ENCODE measurements at regions of chr12 and their contacts with region 1.

Region 1: DNA sequence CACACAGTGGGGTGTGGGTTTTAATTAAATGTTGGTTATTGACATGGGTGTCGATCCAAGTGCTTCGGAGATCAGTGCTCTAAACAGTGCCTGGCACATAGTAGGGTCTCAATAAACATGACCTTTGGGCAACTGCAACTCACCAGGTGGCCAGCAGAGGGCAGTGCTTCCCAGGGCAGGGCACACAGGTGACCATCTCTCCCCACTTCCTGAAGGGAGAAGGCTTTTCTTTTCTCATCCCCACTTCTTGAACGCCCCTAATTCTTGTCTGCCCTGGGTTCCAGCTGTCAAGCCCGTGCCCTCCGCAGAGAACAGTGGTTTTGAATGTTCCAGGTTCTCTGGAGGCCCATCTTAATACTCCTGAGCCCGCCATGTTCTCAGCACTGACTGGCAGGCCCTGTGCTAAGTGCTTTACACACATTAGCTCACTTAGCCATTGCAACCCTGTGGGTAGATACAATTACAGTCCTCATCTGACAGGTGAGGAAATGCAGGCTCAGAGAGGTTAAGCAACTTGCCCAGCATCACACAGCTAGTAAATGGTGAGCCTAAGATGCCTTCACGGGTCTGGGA is 16.3 kb downstream of the RAPGEF3 start:
- DNase-seq: peak; percentile 74 to 86
- H3K4me3 ChIP-seq: no peak overlapping the region
- H3K4me3 Mint-ChIP-seq: no peak overlapping the region
- H3K27ac Mint-ChIP-seq: no peak overlapping the region
- H3K4me1 ChIP-seq: peaks cover 5% of the 10 kb centered on the region; the same call in 1 of the 2 replicates
- H3K4me1 Mint-ChIP-seq: peaks cover 18% of the 10 kb centered on the region
- H3K27me3 ChIP-seq: no peaks in the 10 kb centered on the region
- H3K27me3 Mint-ChIP-seq: no peaks in the 10 kb centered on the region
- CTCF ChIP-seq: peak; percentile 94 to 99

Region 2: GRCh38 chr12:47343677-47344567 is 398.4 kb before region 1 on chr12:
- CTCF ChIA-PET with region 1: no interaction called
- POLR2A ChIA-PET with region 1: no interaction called
- intact Hi-C with region 1: no loop called
- DNase-seq: no peak
- H3K4me3 ChIP-seq: no peak overlapping the region
- H3K4me3 Mint-ChIP-seq: no peak overlapping the region
- H3K27ac Mint-ChIP-seq: no peak overlapping the region
- H3K4me1 ChIP-seq: peaks cover 12% of the 10 kb centered on the region
- H3K4me1 Mint-ChIP-seq: peaks cover 9% of the 10 kb centered on the region
- H3K27me3 ChIP-seq: no peaks in the 10 kb centered on the region
- H3K27me3 Mint-ChIP-seq: no peaks in the 10 kb centered on the region
- CTCF ChIP-seq: no peak

Region 3: GRCh38 chr12:47686645-47687240 is 55.6 kb before region 1 on chr12:
- CTCF ChIA-PET with region 1: no interaction called
- POLR2A ChIA-PET with region 1: no interaction called
- intact Hi-C with region 1: no loop called
- DNase-seq: peak in 1 of 2 experiments; percentile 49
- H3K4me3 ChIP-seq: no peak overlapping the region
- H3K4me3 Mint-ChIP-seq: no peak overlapping the region
- H3K27ac Mint-ChIP-seq: no peak overlapping the region
- H3K4me1 ChIP-seq: no peaks in the 10 kb centered on the region; the same call in 1 of the 2 replicates
- H3K4me1 Mint-ChIP-seq: no peaks in the 10 kb centered on the region
- H3K27me3 ChIP-seq: no peaks in the 10 kb centered on the region
- H3K27me3 Mint-ChIP-seq: no peaks in the 10 kb centered on the region
- CTCF ChIP-seq: peak; percentile 56 to 86

Region 4: GRCh38 chr12:47705566-47706425 is 36.5 kb before region 1 on chr12 and contains the start of gene RPAP3:
- CTCF ChIA-PET with region 1: interaction called, 14 read pairs
- POLR2A ChIA-PET with region 1: no interaction called
- intact Hi-C with region 1: no loop called
- DNase-seq: peak; percentile 97 to 99
- H3K4me3 ChIP-seq: peak within 1 kb of the TSS; percentile 84
- H3K4me3 Mint-ChIP-seq: peak within 1 kb of the TSS; percentile 64
- H3K27ac Mint-ChIP-seq: peak within 1 kb of the TSS; percentile 94
- H3K4me1 ChIP-seq: peaks cover 7% of the 10 kb centered on the region; the same call in 1 of the 2 replicates
- H3K4me1 Mint-ChIP-seq: peaks cover 17% of the 10 kb centered on the region
- H3K27me3 ChIP-seq: no peaks in the 10 kb centered on the region
- H3K27me3 Mint-ChIP-seq: no peaks in the 10 kb centered on the region
- CTCF ChIP-seq: peak; percentile 65 to 84
- total RNA-seq, gene RPAP3: 58.1 and 67.7 TPM in 2 replicates

Region 5: DNA sequence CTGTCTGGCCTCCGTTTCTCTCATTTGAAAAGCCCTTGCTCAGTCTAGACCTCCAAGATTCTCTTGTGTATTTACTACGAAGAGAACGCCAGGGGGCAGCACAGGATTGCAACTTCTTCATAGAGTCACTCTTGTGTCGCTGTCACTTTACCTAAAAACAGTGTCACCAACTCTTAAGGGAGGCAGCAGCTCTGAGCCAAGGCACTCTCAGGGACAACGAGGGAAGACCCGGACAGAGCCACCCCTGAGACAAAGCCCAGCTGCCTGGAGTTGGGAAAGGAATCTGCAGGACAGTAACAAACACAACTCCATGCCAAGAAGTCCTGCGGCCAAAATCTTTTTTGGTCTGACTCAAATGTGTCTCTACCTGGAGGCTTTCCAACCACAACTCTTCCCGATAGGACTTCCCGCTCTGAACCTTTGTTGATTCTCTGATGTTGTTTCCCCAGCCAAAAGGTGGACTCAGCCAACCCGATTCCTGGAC is 26.9 kb before region 1 on chr12:
- CTCF ChIA-PET with region 1: interaction called, 14 read pairs
- POLR2A ChIA-PET with region 1: no interaction called
- intact Hi-C with region 1: loop called (anchors 1 kb)
- DNase-seq: peak; percentile 79 to 81
- H3K4me3 ChIP-seq: no peak overlapping the region
- H3K4me3 Mint-ChIP-seq: no peak overlapping the region
- H3K27ac Mint-ChIP-seq: no peak overlapping the region
- H3K4me1 ChIP-seq: no peaks in the 10 kb centered on the region
- H3K4me1 Mint-ChIP-seq: no peaks in the 10 kb centered on the region
- H3K27me3 ChIP-seq: no peaks in the 10 kb centered on the region
- H3K27me3 Mint-ChIP-seq: no peaks in the 10 kb centered on the region
- CTCF ChIP-seq: peak; percentile 88 to 92

Region 6: GRCh38 chr12:47758834-47759690 is 16.7 kb after region 1 on chr12 and contains the start of gene RAPGEF3:
- CTCF ChIA-PET with region 1: interaction called, 55 read pairs
- POLR2A ChIA-PET with region 1: interaction called, 3 read pairs
- intact Hi-C with region 1: loop called (anchors 1 kb)
- DNase-seq: peak; percentile 85 to 90
- H3K4me3 ChIP-seq: peak within 1 kb of the TSS; percentile 52
- H3K4me3 Mint-ChIP-seq: peak within 1 kb of the TSS; percentile 80
- H3K27ac Mint-ChIP-seq: peak within 1 kb of the TSS; percentile 56
- H3K4me1 ChIP-seq: peaks cover 18% of the 10 kb centered on the region
- H3K4me1 Mint-ChIP-seq: peaks cover 10% of the 10 kb centered on the region
- H3K27me3 ChIP-seq: no peaks in the 10 kb centered on the region
- H3K27me3 Mint-ChIP-seq: no peaks in the 10 kb centered on the region
- CTCF ChIP-seq: peak; percentile 82 to 85
- total RNA-seq, gene RAPGEF3: 1.2 and 2.3 TPM in 2 replicates

Region 7: DNA sequence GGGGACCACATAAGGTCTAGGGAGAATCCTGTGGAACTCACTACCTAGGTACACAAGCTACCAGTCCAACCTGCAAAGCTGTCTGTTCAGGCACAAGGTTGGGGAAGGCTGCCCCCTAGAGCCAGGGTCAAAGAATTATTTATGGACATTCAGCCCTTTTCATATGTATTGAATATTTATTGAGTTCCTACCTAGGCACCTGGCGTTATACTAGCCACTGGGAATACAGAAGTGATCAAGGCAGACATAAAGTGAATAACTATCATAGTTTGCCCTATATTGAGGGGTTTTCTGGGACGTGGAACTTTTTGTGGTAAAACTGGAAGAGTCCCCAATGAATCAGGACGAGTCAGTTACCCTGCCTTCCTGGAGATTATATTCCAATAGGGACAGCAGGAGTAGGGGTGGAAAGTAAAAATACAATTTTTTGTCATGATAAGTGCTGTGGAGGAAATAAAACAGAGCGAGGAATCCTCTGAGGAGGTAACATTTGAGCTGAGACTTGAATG is 24.9 kb after region 1 on chr12:
- CTCF ChIA-PET with region 1: interaction called, 171 read pairs
- POLR2A ChIA-PET with region 1: interaction called, 3 read pairs
- intact Hi-C with region 1: loop called (anchors 1 kb)
- DNase-seq: peak; percentile 68 to 75
- H3K4me3 ChIP-seq: no peak overlapping the region
- H3K4me3 Mint-ChIP-seq: no peak overlapping the region
- H3K27ac Mint-ChIP-seq: peak overlapping the region; percentile 65
- H3K4me1 ChIP-seq: peaks cover 34% of the 10 kb centered on the region
- H3K4me1 Mint-ChIP-seq: peaks cover 2% of the 10 kb centered on the region
- H3K27me3 ChIP-seq: no peaks in the 10 kb centered on the region
- H3K27me3 Mint-ChIP-seq: no peaks in the 10 kb centered on the region
- CTCF ChIP-seq: peak; percentile 50 to 75

Region 8: DNA sequence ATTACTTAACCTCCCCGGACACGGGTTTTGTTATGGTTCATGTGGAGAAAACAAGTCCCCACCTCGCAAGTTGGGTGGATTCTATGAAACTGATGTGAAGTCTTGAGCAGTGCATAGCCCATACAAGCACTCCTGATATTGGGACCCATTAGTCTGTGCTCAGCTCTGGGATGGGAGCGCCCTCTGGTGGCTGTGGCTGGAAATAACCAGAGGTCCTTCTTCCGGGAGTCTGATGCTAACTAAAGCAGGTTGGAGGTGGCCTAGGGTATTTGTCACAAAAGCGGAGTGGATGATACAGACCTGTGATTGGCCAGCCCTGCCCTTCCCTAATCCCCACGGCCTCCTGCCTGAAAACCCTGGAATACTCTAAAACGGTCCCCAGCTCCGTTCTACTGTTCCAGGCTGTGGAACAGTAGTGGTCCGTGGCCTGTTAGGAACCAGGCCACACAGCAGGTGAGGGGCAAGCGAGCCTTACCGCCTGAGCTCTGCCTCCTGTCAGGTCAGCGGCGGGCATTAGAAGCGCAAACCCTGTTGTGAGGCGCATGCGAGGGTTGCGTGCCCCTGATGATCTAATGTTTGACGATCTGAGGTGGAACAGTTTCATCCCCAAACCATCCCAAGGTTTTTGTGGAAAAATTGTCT is 37.1 kb after region 1 on chr12:
- CTCF ChIA-PET with region 1: interaction called, 171 read pairs
- POLR2A ChIA-PET with region 1: no interaction called
- intact Hi-C with region 1: loop called (anchors 1 kb)
- DNase-seq: peak; percentile 88 to 94
- H3K4me3 ChIP-seq: no peak overlapping the region
- H3K4me3 Mint-ChIP-seq: no peak overlapping the region
- H3K27ac Mint-ChIP-seq: peak overlapping the region; percentile 34
- H3K4me1 ChIP-seq: peaks cover 9% of the 10 kb centered on the region; the same call in 1 of the 2 replicates
- H3K4me1 Mint-ChIP-seq: peaks cover 19% of the 10 kb centered on the region
- H3K27me3 ChIP-seq: no peaks in the 10 kb centered on the region
- H3K27me3 Mint-ChIP-seq: no peaks in the 10 kb centered on the region
- CTCF ChIP-seq: peak; percentile 97 to 99